Heart left ventricle (tissue), 16 donors: ENCODE measurements at regions of chr2 and their contacts with region 1.

Region 1: GRCh38 chr2:147843864-147844696 is 749 bp upstream of the ACVR2A start:
- DNase-seq: peak; percentile 94 to 96 (median 94)
- ATAC-seq: peak; percentile 88 to 97 (median 96)
- H3K4me3 ChIP-seq: peak overlapping the region; percentile 71 to 94 (median 80)
- H3K27ac ChIP-seq: peak overlapping the region; percentile 91 to 98 (median 97)
- H3K4me1 ChIP-seq: peaks cover 0 to 36% (median 21%) of the 10 kb centered on the region in 12 donors
- H3K27me3 ChIP-seq: peaks cover 0 to 5% (median 0%) of the 10 kb centered on the region in 9 donors
- CTCF ChIP-seq: peak in 8 of 12 donors; percentile 14 to 48 (median 35)
- POLR2A ChIP-seq: peak in 1 of 2 donors; percentile 48

Region 2: DNA sequence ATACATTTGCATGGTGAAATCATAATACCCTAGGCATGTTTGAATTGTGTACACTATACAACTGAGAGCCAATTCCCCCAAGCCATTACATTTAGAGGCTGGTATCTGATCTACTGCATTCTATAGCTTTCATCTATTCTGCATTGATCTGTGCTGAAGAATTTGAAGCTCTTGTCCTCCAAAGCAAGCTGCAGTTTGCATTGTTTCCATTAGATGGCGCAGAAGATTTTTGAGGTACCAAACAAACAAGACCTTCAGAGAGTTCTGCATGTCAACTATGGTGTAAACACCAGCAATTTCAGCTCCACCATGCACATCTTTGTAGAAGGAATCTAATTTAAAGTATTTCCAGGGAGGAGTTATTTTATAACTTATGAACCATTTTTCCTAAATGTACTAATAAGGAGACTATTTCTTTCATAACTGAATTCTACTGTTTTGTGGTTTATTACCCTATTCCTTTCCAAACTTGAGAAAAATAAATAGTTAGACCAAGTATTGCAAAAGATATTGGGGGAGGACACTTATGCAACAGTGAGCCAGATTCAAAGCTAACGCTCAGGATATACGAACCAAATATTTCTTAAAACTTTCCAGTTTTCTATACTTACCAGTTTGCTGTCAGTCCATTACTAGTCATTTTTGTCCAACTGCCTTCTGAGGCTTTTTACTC is 761.1 kb before region 1 on chr2:
- intact Hi-C with region 1: loop called in 1 of 10 experiments (anchors 5 kb)
- DNase-seq: peak in 2 of 5 donors; percentile 20 to 27
- ATAC-seq: peak in 2 of 4 donors; percentile 33 to 37
- H3K4me3 ChIP-seq: no peak overlapping the region
- H3K27ac ChIP-seq: no peak overlapping the region
- H3K4me1 ChIP-seq: peaks cover 0 to 6% (median 0%) of the 10 kb centered on the region in 12 donors
- H3K27me3 ChIP-seq: no peaks in the 10 kb centered on the region
- CTCF ChIP-seq: peak; percentile 76 to 89 (median 84)
- POLR2A ChIP-seq: no peak

Region 3: GRCh38 chr2:147558620-147559019 is 285.5 kb before region 1 on chr2:
- intact Hi-C with region 1: loop called in 1 of 10 experiments (anchors 5 kb)
- DNase-seq: no peak
- ATAC-seq: no peak
- H3K4me3 ChIP-seq: no peak overlapping the region
- H3K27ac ChIP-seq: peak overlapping the region in 1 of 12 donors; percentile 29
- H3K4me1 ChIP-seq: peaks cover 0 to 20% (median 12%) of the 10 kb centered on the region in 12 donors
- H3K27me3 ChIP-seq: no peaks in the 10 kb centered on the region
- CTCF ChIP-seq: no peak
- POLR2A ChIP-seq: no peak

Region 4: DNA sequence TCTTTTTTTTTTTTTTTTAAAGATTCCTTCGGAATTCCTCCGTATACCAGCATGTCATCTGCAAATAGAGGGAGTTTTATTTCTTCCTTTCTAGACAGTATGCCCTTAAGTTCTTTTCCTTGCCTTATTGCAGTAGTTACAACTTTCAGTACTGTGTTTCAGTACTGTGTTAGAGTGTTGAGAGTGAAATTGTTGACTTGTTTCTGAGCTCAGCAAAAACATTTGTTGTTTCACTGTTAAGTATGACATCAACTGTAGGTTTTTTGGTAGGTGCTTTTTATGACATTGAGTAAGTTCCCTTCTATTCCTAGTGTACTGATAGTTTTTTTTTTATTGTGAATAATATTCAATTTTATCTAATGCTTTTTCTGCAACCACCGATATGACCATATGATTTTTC is 44.6 kb after region 1 on chr2:
- intact Hi-C with region 1: loop called in 4 of 10 experiments (anchors 5 to 10 kb)
- DNase-seq: no peak
- ATAC-seq: no peak
- H3K4me3 ChIP-seq: no peak overlapping the region
- H3K27ac ChIP-seq: no peak overlapping the region
- H3K4me1 ChIP-seq: peaks cover 0 to 24% (median 11%) of the 10 kb centered on the region in 12 donors
- H3K27me3 ChIP-seq: no peaks in the 10 kb centered on the region
- CTCF ChIP-seq: no peak
- POLR2A ChIP-seq: no peak

Region 5: DNA sequence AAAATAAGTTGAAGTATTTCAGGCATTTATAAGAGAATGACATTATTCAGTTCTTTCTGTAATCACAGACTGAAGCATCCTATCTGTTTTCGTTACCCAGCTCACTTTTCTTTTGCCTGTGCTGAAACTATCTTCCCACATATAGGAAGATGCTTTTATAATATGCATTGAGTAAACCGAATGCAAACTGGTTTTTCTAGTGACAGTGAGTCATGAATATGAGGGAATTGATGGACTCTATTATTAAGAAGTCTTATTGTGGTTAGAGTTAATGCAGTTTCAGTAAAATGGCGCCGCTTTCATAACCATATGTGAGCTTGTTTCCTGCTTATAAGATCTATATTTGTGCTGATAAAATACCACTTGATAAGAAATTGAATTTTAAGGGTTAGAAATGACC is 60.0 kb after region 1 on chr2:
- intact Hi-C with region 1: loop called in 2 of 10 experiments (anchors 10 kb)
- DNase-seq: no peak
- ATAC-seq: no peak
- H3K4me3 ChIP-seq: no peak overlapping the region
- H3K27ac ChIP-seq: no peak overlapping the region
- H3K4me1 ChIP-seq: no peaks in the 10 kb centered on the region
- H3K27me3 ChIP-seq: no peaks in the 10 kb centered on the region
- CTCF ChIP-seq: no peak
- POLR2A ChIP-seq: no peak

Region 6: DNA sequence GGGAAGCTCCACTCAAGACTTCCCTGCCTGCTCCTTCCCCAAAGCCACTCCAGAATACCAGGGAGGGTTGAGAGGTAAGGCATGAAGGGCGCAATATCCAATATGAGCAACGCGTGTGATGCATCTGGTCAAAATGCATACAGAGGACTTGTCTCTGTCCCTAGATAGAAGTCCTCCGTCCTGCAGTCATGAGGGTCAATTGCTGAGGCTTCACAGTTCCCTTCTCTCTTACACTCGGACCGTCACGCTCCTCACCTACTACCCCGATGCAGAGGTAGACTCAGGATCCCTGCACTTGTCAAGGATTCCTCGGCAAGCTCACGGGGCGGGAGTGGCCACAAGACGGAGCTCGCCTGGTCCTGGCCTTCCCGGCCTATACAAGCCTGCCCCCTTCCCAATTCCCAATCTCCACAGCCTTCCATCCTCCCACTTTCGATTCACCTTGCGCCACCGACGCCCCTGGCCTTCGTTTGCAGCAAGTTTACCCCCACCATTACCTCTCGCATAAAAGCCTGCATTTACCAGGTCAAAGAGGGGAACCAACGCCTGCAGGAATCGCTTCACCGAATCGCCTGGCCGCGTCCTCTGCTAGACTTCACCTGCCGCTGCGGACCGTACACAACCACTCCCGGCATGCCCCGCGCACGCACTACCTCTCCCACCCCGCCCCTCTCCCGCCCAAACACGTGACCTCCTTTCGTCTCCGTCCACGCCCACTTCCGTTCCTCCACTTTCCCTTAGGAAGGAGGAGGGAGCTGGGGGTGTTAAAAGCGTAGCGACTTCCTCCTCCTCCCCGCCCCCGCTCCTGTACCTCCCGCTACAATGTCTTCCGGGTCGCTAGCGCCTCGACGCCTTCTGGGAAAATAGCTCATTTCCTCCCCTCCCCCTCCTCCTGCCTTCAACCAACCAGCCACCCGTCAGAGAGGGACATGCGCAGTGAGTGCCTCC is 176.3 kb after region 1 on chr2 and contains the start of gene ORC4:
- intact Hi-C with region 1: loop called in 1 of 10 experiments (anchors 10 kb)
- DNase-seq: peak; percentile 97 to 99 (median 99)
- ATAC-seq: peak; percentile 98 to 99 (median 98)
- H3K4me3 ChIP-seq: peak within 1 kb of the TSS; percentile 73 to 94 (median 84)
- H3K27ac ChIP-seq: peak within 1 kb of the TSS; percentile 61 to 98 (median 93)
- H3K4me1 ChIP-seq: peaks cover 3 to 50% (median 34%) of the 10 kb centered on the region in 12 donors
- H3K27me3 ChIP-seq: no peaks in the 10 kb centered on the region
- CTCF ChIP-seq: peak in 10 of 12 donors; percentile 3 to 57 (median 34)
- POLR2A ChIP-seq: peak in 1 of 2 donors; percentile 54
- total RNA-seq, gene ORC4: 33.4 to 64.7 (median 44.1) TPM